Activated CD4-positive, alpha-beta T cell treated with anti-CD3 and anti-CD28 coated beads, Interleukin-2, amount 10 ng/mL, durations not matched to agents 7 days and 5 days (primary cell): ENCODE measurements at regions of chr10 and their contacts with region 1.

Region 1: GRCh38 chr10:86585037-86585725 is 63.6 kb upstream of the WAPL start:
- DNase-seq: peak; percentile 76
- H3K4me3 Mint-ChIP-seq: no peak overlapping the region
- H3K27ac Mint-ChIP-seq: no peak overlapping the region
- H3K4me1 Mint-ChIP-seq: peaks cover 3% of the 10 kb centered on the region
- H3K27me3 Mint-ChIP-seq: no peaks in the 10 kb centered on the region

Region 2: GRCh38 chr10:86389441-86390193 is 195.6 kb before region 1 on chr10:
- CTCF ChIA-PET with region 1: interaction called, 13 read pairs
- POLR2A ChIA-PET with region 1: no interaction called
- DNase-seq: no peak
- H3K4me3 Mint-ChIP-seq: peak overlapping the region; percentile 62
- H3K27ac Mint-ChIP-seq: no peak overlapping the region
- H3K4me1 Mint-ChIP-seq: peaks cover 6% of the 10 kb centered on the region
- H3K27me3 Mint-ChIP-seq: peaks cover 42% of the 10 kb centered on the region